Left ventricle myocardium superior (tissue), 1 donor: ENCODE measurements at regions of chr13 and their contacts with region 1.

Region 1: DNA sequence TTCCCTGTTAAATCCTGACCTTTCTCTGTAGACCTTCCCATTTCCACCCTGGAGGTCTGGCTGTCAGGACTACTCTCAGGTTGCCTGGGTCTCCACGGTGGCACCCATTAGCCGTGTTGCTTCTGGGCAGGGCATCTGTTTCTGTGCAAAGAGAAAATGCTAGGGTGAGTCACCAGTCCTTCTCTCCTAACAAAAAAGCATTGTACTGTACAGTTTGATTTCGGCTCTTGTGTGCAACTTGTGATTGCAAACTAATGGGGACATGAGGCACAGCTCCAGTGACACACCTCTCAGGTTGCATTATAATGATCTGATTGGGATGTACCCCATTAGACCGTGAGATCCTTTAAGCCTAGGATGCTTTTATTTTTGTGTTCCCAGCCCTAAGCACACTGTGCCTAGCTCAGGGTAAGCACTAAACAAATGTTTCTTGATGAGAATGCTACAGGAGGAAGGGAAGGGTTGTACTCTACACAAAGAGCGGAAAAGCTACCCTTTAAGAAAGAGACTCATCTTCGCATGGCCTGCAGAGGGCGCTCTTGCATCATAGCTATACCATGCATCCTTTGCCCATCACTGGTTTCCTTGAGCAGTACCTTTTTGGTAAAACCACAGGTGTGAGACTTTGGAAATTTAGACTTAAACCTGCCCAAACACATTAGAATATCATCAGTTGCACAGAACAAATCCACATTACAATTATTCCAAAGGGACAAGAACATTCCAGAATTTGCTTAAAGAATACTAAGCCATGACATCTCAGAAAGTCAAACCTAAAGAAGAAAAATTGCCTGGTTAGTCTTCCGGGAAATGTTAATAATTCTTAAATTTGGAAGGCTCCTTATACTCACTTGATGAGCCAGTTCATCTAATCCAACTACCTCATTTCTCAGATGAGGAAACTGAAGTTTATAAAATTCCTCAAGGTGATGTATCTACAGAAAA is 20.3 kb upstream of the TRIM13 start:
- DNase-seq: peak; percentile 82
- ATAC-seq: peak; percentile 82

Region 2: GRCh38 chr13:50801087-50801931 is 824.7 kb after region 1 on chr13:
- intact Hi-C with region 1: loop called (anchors 10 kb)
- DNase-seq: no peak
- ATAC-seq: peak; percentile 96

Region 3: GRCh38 chr13:50911937-50912795 is 935.6 kb after region 1 on chr13:
- intact Hi-C with region 1: loop called (anchors 10 kb)
- DNase-seq: peak; percentile 91
- ATAC-seq: peak; percentile 41